ENCODE measurements at regions of chr12 and their contacts with region 1.

Region 1: GRCh38 chr12:101759396-101760047 is 20.3 kb upstream of the SYCP3 start:
- DNase-seq: peak; percentile 62
- H3K4me3 ChIP-seq: no peak overlapping the region
- H3K27ac ChIP-seq: no peak overlapping the region
- H3K4me1 ChIP-seq: no peaks in the 10 kb centered on the region
- CTCF ChIP-seq: peak; percentile 94

Region 2: GRCh38 chr12:101375573-101375972 is 383.9 kb before region 1 on chr12:
- CTCF ChIA-PET with region 1: no interaction called
- POLR2A ChIA-PET with region 1: no interaction called
- intact Hi-C with region 1: no loop called
- DNase-seq: no peak
- H3K4me3 ChIP-seq: no peak overlapping the region
- H3K27ac ChIP-seq: no peak overlapping the region
- H3K4me1 ChIP-seq: no peaks in the 10 kb centered on the region
- CTCF ChIP-seq: no peak

Region 3: DNA sequence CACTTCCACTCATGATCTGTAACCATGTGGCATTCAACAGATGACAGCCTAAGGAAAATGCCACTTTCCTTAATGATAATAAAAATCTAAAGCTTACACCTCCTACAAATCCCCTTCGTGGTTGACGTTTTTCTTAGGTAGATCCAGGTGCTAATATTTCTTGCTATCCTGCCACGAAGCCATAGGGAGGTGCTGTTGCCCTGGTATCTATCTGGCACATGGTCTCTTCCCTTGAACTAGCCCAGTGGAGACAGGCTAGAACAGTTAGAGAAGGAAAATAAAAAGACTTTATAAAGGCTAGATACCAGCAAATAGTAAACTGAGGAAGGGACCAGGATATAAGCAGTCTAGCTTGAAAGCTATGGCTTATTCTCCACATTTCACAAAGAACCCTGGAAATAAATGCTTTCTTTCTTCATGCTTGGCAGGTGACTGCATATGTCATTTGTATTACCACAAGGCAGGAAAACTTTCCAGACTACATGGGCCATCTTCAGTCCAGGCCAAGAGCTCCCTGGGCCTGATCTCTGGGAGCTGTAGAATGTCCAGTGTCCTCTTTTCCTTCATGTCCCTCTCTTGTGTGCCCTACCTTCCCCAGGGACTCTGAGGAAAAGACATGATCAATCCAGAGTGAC is 269.1 kb before region 1 on chr12:
- CTCF ChIA-PET with region 1: no interaction called
- POLR2A ChIA-PET with region 1: no interaction called
- intact Hi-C with region 1: loop called (anchors 5 kb)
- DNase-seq: peak; percentile 61
- H3K4me3 ChIP-seq: no peak overlapping the region
- H3K27ac ChIP-seq: no peak overlapping the region
- H3K4me1 ChIP-seq: peaks cover 8% of the 10 kb centered on the region
- CTCF ChIP-seq: peak; percentile 83

Region 4: DNA sequence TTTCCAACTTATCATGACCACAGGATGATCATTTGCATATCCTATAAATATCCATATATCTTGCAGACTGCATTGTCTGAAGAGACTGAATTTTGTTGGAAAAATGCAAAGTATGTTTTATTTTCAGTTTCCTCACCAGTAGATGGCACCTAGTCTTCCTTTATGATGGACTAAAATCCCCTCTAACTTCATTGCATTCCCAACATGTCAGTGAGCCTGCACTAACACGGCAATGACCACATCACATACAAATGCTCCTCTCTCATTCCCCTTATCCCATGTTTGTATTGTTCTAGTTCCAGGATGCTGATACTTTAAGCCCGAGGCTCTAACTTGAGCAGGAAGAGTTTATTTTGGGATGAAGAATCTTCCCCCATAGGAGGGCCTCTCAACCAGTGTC is 189.5 kb before region 1 on chr12:
- CTCF ChIA-PET with region 1: no interaction called
- POLR2A ChIA-PET with region 1: no interaction called
- intact Hi-C with region 1: loop called (anchors 2 kb)
- DNase-seq: peak; percentile 31
- H3K4me3 ChIP-seq: no peak overlapping the region
- H3K27ac ChIP-seq: no peak overlapping the region
- H3K4me1 ChIP-seq: peaks cover 9% of the 10 kb centered on the region
- CTCF ChIP-seq: peak; percentile 75

Measured in OCI-LY7 (cell line).